ENCODE measurements at regions of chr5 and their contacts with region 1.

Region 1: DNA sequence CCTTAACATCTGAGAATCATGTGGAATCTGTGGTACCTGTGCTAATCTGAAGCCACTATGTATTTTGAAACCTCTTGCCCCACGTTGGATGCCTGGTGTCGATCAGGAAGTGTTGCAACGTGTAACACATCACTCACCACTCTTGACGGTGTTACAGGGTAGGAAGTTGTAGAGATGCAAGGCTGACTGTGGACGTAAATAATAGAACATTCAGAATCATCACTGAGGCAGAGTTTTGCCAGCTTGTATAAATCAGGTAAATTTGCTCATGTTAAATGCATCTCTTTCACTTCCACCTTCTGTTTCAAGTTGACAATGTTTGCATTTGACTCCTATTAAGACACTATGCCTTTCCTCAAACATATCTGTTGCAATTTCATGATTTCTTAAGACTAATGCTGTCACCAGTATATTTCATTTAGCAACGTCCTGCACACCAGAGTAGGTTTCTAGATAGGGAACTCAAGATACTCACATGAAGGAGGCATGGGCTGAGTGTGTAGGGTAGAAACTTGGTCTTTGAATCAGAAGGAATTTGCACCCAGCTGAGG is 38.1 kb downstream of the BASP1 start:
- DNase-seq: peak; percentile 77
- ATAC-seq: peak; percentile 76
- H3K4me3 ChIP-seq: peak overlapping the region in 2 of 5 experiments; percentile 15 to 17
- H3K4me3 Mint-ChIP-seq: peak overlapping the region; percentile 74
- H3K27ac ChIP-seq: peak overlapping the region; percentile 22 to 72
- H3K27ac Mint-ChIP-seq: peak overlapping the region; percentile 90
- H3K4me1 ChIP-seq: peaks cover 49 to 54% of the 10 kb centered on the region in 2 donors
- H3K4me1 Mint-ChIP-seq: peaks cover 86% of the 10 kb centered on the region
- H3K27me3 ChIP-seq: no peaks in the 10 kb centered on the region
- H3K27me3 Mint-ChIP-seq: no peaks in the 10 kb centered on the region
- CTCF ChIP-seq: no peak

Region 2: DNA sequence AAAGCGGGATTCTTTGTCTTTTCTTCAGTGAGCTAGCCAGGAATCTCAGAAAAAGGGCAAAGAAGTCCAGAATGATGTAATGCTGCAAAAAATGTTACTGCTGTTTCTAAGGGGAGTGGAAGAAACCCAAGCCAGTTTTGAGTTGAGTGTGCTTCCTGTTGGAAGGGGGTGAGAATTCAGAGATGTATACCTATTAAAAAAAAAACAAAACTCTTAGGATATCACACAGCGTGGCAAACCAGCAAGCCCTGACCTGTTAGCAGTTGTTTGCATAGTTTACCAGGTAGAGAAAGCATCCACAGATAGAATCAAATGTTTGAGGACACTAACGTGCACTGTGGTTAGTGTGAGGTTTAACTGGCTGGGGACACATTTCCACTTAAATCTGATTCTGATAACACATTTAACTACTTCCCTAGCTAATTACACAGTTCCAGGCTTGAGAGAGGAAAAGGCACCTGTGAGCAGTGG is 26.7 kb before region 1 on chr5:
- CTCF ChIA-PET with region 1: interaction called, 4 read pairs
- POLR2A ChIA-PET with region 1: interaction called, 3 read pairs
- intact Hi-C with region 1: loop called (anchors 2 kb)
- DNase-seq: no peak
- ATAC-seq: no peak
- H3K4me3 ChIP-seq: no peak overlapping the region
- H3K4me3 Mint-ChIP-seq: peak overlapping the region; percentile 75
- H3K27ac ChIP-seq: peak overlapping the region; percentile 14 to 69
- H3K27ac Mint-ChIP-seq: peak overlapping the region; percentile 84
- H3K4me1 ChIP-seq: peaks cover 45 to 47% of the 10 kb centered on the region in 2 donors
- H3K4me1 Mint-ChIP-seq: peaks cover 80% of the 10 kb centered on the region
- H3K27me3 ChIP-seq: no peaks in the 10 kb centered on the region
- H3K27me3 Mint-ChIP-seq: no peaks in the 10 kb centered on the region
- CTCF ChIP-seq: no peak

Region 3: GRCh38 chr5:17241635-17242034 is 13.9 kb before region 1 on chr5:
- CTCF ChIA-PET with region 1: no interaction called
- POLR2A ChIA-PET with region 1: no interaction called
- intact Hi-C with region 1: loop called (anchors 2 kb)
- DNase-seq: no peak
- ATAC-seq: no peak
- H3K4me3 ChIP-seq: no peak overlapping the region
- H3K4me3 Mint-ChIP-seq: peak overlapping the region; percentile 49
- H3K27ac ChIP-seq: no peak overlapping the region
- H3K27ac Mint-ChIP-seq: peak overlapping the region; percentile 60
- H3K4me1 ChIP-seq: peaks cover 25 to 27% of the 10 kb centered on the region in 2 donors
- H3K4me1 Mint-ChIP-seq: peaks cover 64% of the 10 kb centered on the region
- H3K27me3 ChIP-seq: no peaks in the 10 kb centered on the region
- H3K27me3 Mint-ChIP-seq: no peaks in the 10 kb centered on the region
- CTCF ChIP-seq: no peak

Region 4: DNA sequence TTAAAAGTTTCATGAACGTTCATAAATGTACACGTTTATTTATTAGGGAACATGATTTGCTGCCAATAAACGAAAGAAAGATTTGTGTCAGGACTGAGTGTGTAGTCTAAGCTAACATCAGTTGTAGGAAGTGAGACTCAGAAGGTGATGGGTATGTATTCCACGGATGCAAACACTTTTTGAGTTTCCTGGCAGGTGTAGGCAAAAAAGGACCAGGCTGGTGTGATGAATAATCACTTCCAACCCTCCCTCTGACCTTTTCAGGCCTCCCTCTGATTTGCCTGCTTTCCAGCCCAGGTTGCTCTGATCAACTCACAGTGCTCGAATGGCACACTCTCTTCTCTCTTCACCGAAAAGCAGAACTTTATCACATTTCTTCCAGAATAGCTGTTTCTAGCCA is 13.7 kb after region 1 on chr5:
- CTCF ChIA-PET with region 1: interaction called, 3 read pairs
- POLR2A ChIA-PET with region 1: no interaction called
- intact Hi-C with region 1: loop called (anchors 2 kb)
- DNase-seq: peak; percentile 48
- ATAC-seq: peak; percentile 59
- H3K4me3 ChIP-seq: peak overlapping the region in 2 of 5 experiments; percentile 14 to 15
- H3K4me3 Mint-ChIP-seq: peak overlapping the region; percentile 52
- H3K27ac ChIP-seq: peak overlapping the region; percentile 43 to 71
- H3K27ac Mint-ChIP-seq: peak overlapping the region; percentile 81
- H3K4me1 ChIP-seq: peaks cover 42 to 43% of the 10 kb centered on the region in 2 donors
- H3K4me1 Mint-ChIP-seq: peaks cover 76% of the 10 kb centered on the region
- H3K27me3 ChIP-seq: no peaks in the 10 kb centered on the region
- H3K27me3 Mint-ChIP-seq: no peaks in the 10 kb centered on the region
- CTCF ChIP-seq: no peak

Region 5: GRCh38 chr5:17436761-17437221 is 181.2 kb after region 1 on chr5:
- CTCF ChIA-PET with region 1: no interaction called
- POLR2A ChIA-PET with region 1: no interaction called
- intact Hi-C with region 1: loop called (anchors 5 kb)
- DNase-seq: peak; percentile 51
- ATAC-seq: peak; percentile 63
- H3K4me3 ChIP-seq: peak overlapping the region; percentile 31 to 70 (median 48)
- H3K4me3 Mint-ChIP-seq: peak overlapping the region; percentile 85
- H3K27ac ChIP-seq: peak overlapping the region; percentile 42 to 74
- H3K27ac Mint-ChIP-seq: peak overlapping the region; percentile 81
- H3K4me1 ChIP-seq: peaks cover 14 to 17% of the 10 kb centered on the region in 2 donors
- H3K4me1 Mint-ChIP-seq: peaks cover 28% of the 10 kb centered on the region
- H3K27me3 ChIP-seq: no peaks in the 10 kb centered on the region
- H3K27me3 Mint-ChIP-seq: no peaks in the 10 kb centered on the region
- CTCF ChIP-seq: no peak